Transverse colon (tissue), 4 donors: ENCODE measurements at regions of chr4 and their contacts with region 1.

Region 1: GRCh38 chr4:25439918-25440477 is 62.9 kb downstream of the ANAPC4 start:
- DNase-seq: peak; percentile 51
- H3K4me3 ChIP-seq: no peak overlapping the region
- H3K27ac ChIP-seq: no peak overlapping the region
- H3K4me1 ChIP-seq: no peaks in the 10 kb centered on the region
- H3K27me3 ChIP-seq: no peaks in the 10 kb centered on the region
- CTCF ChIP-seq: peak; percentile 64 to 91 (median 79)
- EP300 ChIP-seq: no peak
- POLR2A ChIP-seq: no peak

Region 2: GRCh38 chr4:24949970-24950369 is 490.0 kb before region 1 on chr4:
- in situ Hi-C with region 1: no loop called
- intact Hi-C with region 1: no loop called
- DNase-seq: no peak
- H3K4me3 ChIP-seq: no peak overlapping the region
- H3K27ac ChIP-seq: no peak overlapping the region
- H3K4me1 ChIP-seq: no peaks in the 10 kb centered on the region
- H3K27me3 ChIP-seq: no peaks in the 10 kb centered on the region
- CTCF ChIP-seq: no peak
- EP300 ChIP-seq: no peak
- POLR2A ChIP-seq: no peak

Region 3: GRCh38 chr4:25466966-25467697 is 27.1 kb after region 1 on chr4:
- in situ Hi-C with region 1: no loop called
- intact Hi-C with region 1: no loop called
- DNase-seq: no peak
- H3K4me3 ChIP-seq: no peak overlapping the region
- H3K27ac ChIP-seq: no peak overlapping the region
- H3K4me1 ChIP-seq: no peaks in the 10 kb centered on the region
- H3K27me3 ChIP-seq: no peaks in the 10 kb centered on the region
- CTCF ChIP-seq: no peak
- EP300 ChIP-seq: no peak
- POLR2A ChIP-seq: no peak

Region 4: DNA sequence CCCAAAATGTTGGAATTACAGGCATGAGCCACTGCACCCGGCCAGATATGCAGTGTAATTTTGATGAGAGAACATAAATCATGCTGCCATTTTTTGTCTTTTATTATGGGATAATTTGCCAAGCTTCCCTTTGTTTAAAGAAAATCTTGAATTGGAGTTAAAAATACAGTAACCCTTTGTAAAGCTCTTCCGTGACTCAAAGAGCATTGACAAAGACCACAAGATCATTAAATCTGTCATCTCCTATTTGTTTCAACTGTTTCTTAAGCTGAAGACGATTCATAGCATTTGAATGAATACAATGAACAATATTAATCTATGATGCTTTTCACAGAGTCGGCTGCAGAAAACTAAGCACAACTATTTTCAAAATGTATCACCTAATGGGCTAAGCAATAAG is 69.6 kb after region 1 on chr4:
- in situ Hi-C with region 1: no loop called
- intact Hi-C with region 1: no loop called
- DNase-seq: no peak
- H3K4me3 ChIP-seq: no peak overlapping the region
- H3K27ac ChIP-seq: no peak overlapping the region
- H3K4me1 ChIP-seq: no peaks in the 10 kb centered on the region
- H3K27me3 ChIP-seq: no peaks in the 10 kb centered on the region
- CTCF ChIP-seq: no peak
- EP300 ChIP-seq: no peak
- POLR2A ChIP-seq: no peak

Region 5: DNA sequence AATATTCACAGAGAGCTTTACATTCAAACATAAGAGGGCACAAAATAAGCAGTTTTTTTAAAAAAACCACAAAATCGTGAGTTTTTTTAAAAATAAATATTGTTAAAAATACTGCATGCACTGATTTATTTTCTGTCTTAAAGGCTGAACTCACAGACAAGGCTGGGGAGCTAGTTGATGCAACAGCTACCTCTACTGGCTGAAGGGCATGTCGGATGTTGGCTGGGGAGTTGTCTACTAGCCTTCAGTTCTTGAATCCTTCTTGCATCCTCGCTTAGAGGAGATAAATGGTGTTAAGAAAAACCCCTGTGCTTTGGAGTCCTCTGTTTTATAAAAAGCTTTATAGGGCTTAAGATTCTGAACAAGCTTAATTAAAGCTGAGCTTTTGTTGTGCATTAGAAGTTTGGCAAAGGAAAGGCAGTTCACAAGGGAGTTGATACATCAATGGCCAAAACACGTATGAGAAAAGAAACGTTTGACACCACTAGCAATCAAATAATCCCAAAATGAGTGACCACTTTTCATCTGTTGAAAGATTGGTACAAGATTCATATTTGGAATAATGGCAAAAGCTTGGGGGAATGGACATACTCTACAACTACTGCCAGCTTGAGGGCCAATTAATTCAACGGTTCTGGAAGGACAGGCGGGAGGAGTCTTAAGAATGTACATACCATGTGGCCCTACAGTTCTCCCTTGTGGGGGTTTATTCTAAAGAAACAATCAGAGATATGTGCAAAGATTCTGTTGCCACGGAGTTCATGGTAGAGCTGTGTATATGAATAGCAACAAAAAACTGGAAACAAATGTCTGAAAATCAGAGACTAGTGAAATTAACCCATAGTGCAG is 328.1 kb after region 1 on chr4:
- in situ Hi-C with region 1: loop called in 1 of 4 experiments (anchors 25 kb)
- intact Hi-C with region 1: no loop called
- DNase-seq: peak; percentile 37
- H3K4me3 ChIP-seq: no peak overlapping the region
- H3K27ac ChIP-seq: no peak overlapping the region
- H3K4me1 ChIP-seq: no peaks in the 10 kb centered on the region
- H3K27me3 ChIP-seq: no peaks in the 10 kb centered on the region
- CTCF ChIP-seq: peak; percentile 48 to 66 (median 58)
- EP300 ChIP-seq: no peak
- POLR2A ChIP-seq: no peak

Region 6: DNA sequence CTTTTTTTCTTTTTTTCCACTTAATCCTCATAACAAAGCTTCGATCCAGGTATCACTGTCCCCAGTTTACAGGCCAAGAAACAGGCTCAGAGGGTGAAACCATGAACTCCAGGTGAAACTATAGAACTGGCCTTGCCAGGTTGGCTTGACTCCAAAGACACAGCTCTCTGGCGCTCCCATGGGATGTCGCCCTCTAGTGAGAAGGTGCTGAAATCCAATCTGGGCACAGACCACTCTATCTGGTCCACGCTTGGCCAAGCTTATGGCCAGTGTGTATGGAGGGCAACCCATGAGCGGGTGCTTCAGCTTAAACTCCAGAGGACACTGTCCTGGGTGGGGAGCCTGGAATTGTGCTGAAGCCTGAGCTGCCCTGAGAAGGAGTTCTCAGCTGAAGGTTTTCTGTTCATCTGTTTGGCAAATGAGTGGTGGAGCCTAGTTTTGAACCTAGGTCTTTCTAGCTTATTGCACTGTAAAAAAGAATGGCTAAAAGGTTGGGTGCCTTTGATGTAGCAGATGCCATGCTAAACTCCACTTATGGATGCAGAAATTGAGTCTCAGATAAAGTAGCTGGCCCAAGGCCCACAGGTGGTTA is 352.3 kb after region 1 on chr4:
- in situ Hi-C with region 1: loop called in 3 of 4 experiments (anchors 25 kb)
- intact Hi-C with region 1: no loop called
- DNase-seq: peak; percentile 61
- H3K4me3 ChIP-seq: no peak overlapping the region
- H3K27ac ChIP-seq: no peak overlapping the region
- H3K4me1 ChIP-seq: no peaks in the 10 kb centered on the region
- H3K27me3 ChIP-seq: no peaks in the 10 kb centered on the region
- CTCF ChIP-seq: peak; percentile 42 to 60 (median 50)
- EP300 ChIP-seq: no peak
- POLR2A ChIP-seq: no peak